ENCODE measurements at regions of chr2 and their contacts with region 1.

Region 1: GRCh38 chr2:17672583-17673317 is 80.9 kb downstream of the SMC6 start:
- DNase-seq: no peak
- H3K4me3 Mint-ChIP-seq: no peak overlapping the region
- H3K27ac Mint-ChIP-seq: peak overlapping the region; percentile 21
- H3K4me1 Mint-ChIP-seq: peaks cover 12% of the 10 kb centered on the region
- H3K27me3 Mint-ChIP-seq: no peaks in the 10 kb centered on the region

Region 2: DNA sequence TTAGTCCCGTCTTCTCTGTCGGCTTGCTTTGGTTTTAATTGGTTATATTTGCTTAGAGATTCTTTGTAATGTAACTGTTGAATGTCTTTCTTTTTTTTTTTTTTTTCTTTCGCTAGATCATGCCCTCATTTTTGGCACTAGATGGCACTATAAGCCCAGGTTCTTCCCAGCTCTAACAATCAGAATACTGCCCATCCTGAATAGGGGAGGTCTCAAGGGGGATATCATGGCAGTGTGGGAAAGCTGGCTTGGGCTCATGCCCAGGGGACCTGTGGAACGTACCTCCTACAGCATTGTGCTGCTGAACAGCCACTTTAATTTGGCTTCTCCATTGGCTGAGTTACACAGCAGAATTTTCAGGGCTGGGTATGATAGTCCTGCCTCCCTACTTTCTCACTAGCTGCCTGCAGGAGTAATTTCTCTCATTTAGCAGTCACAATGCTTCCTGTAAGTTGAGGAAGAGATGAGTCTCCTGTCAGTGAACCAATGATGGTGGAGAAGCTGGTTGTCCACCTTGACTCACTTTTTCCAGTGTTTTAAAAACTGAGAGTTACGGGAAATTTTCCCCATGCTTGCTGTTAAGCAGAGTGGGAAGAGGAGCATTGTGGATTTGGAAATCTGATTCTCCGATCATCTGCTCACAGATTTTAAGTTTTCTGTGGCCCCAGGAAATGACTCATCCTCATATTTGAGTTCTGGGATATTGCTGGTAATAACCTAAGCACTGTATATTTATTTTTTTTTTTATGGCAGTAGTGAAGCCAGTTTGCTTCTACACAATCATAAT is 201.7 kb before region 1 on chr2:
- CTCF ChIA-PET with region 1: interaction called, 10 read pairs
- POLR2A ChIA-PET with region 1: no interaction called
- DNase-seq: no peak
- H3K4me3 Mint-ChIP-seq: no peak overlapping the region
- H3K27ac Mint-ChIP-seq: no peak overlapping the region
- H3K4me1 Mint-ChIP-seq: no peaks in the 10 kb centered on the region
- H3K27me3 Mint-ChIP-seq: no peaks in the 10 kb centered on the region

Region 3: GRCh38 chr2:17587469-17587868 is 85.3 kb before region 1 on chr2:
- CTCF ChIA-PET with region 1: no interaction called
- POLR2A ChIA-PET with region 1: no interaction called
- DNase-seq: no peak
- H3K4me3 Mint-ChIP-seq: no peak overlapping the region
- H3K27ac Mint-ChIP-seq: no peak overlapping the region
- H3K4me1 Mint-ChIP-seq: no peaks in the 10 kb centered on the region
- H3K27me3 Mint-ChIP-seq: no peaks in the 10 kb centered on the region

Region 4: DNA sequence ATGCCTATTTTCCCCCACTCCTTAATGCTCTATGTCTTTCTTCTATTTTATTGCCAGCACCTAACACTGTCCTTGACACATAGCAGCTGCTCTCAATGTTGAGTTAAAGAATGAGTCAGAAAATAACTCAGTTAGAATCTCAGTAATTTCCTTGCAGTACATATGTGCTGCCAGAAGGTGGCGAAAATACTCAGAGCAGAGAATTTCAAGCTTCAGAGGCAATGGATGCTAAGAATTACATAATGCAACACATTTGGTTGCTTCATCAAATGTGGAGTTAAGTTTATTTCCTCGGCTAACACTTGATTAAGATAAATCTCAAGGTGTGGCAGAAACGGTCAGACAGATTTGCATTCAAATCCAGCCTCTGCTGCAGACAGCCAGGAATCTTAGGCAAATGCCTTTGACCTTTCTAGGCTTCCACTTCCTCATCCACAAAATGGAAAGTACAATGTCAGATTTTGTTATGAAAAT is 26.6 kb before region 1 on chr2:
- CTCF ChIA-PET with region 1: interaction called, 106 read pairs
- POLR2A ChIA-PET with region 1: interaction called, 4 read pairs
- DNase-seq: peak; percentile 42
- H3K4me3 Mint-ChIP-seq: no peak overlapping the region
- H3K27ac Mint-ChIP-seq: no peak overlapping the region
- H3K4me1 Mint-ChIP-seq: peaks cover 8% of the 10 kb centered on the region
- H3K27me3 Mint-ChIP-seq: no peaks in the 10 kb centered on the region

Region 5: DNA sequence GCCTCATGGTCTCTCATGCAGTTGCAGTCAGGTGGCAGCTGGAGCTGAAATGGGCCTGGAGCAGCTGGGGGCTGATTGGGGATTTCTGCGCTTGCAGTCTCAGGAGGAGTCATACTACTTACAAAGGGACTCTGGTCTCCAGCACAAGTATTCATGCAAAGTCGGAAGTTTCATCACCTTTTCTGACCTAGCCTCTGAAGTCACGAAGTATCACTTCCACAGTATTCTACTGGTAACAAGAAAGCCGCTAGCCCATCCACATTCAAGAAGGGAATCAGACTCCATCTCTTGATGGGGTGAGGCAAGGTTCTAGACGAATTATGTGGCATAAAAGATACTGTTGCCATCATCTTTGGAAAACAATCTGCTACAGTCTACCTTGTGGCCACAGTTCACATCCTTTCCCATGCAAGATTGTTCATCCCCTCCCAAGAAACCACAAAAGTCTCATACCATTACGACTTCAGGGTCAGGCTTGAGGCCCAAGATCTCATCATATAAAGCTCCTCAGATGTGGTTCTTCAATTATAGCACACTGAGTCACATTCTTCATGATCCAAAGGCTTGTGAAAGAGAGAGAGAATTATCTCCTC is 14.4 kb before region 1 on chr2:
- CTCF ChIA-PET with region 1: interaction called, 21 read pairs
- POLR2A ChIA-PET with region 1: interaction called, 6 read pairs
- DNase-seq: no peak
- H3K4me3 Mint-ChIP-seq: no peak overlapping the region
- H3K27ac Mint-ChIP-seq: no peak overlapping the region
- H3K4me1 Mint-ChIP-seq: peaks cover 19% of the 10 kb centered on the region
- H3K27me3 Mint-ChIP-seq: no peaks in the 10 kb centered on the region

Region 6: DNA sequence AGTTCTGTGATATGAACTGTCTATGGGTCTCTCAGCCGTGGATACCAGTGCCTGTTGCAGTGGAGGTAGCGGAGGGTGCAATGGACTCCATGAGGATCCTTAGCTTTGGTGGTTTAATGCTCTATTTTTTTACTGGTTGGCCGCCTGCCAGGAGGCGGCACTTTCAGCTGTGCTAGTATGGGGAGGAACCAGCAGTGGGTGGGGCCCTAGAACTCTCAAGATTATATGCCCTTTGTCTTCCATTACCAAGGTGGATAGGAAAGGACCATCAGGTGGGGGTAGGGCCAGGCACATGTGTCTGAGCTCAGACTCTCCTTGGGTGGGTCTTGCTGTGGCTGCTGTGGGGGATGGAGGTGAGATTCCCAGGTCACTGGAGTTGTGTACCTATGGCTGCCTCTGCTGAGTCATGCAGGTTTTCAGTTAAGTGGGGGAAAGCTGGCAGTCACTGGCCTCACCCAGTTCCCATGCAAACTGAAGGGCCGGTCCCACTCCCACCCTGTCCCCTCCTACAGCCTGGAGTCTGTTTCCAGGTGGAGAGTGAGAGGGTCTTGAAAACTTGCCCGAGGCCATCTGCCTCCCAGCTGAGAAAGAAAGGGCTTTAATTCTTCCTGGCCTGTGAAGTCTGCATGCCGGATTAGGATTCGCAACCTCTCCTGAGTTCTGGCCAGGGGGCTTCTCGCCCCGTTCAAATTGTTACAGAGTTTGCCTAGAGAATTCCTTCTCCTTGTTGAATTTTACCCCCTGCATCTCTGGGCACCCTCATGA is 220.2 kb after region 1 on chr2:
- CTCF ChIA-PET with region 1: no interaction called
- POLR2A ChIA-PET with region 1: no interaction called
- DNase-seq: no peak
- H3K4me3 Mint-ChIP-seq: no peak overlapping the region
- H3K27ac Mint-ChIP-seq: no peak overlapping the region
- H3K4me1 Mint-ChIP-seq: no peaks in the 10 kb centered on the region
- H3K27me3 Mint-ChIP-seq: peaks cover 2% of the 10 kb centered on the region

Measured in activated CD4-positive, alpha-beta memory T cell treated with anti-CD3 and anti-CD28 coated beads, Interleukin-2, amount 10 ng/mL, durations not matched to agents 7 days and 5 days (primary cell).